ENCODE measurements at regions of chr6 and their contacts with region 1.

Region 1: GRCh38 chr6:42505377-42505702 is 53.6 kb upstream of the TRERF1 start:
- DNase-seq: no peak
- H3K4me3 Mint-ChIP-seq: no peak overlapping the region
- H3K27ac Mint-ChIP-seq: no peak overlapping the region
- H3K4me1 Mint-ChIP-seq: peaks cover 23% of the 10 kb centered on the region
- H3K27me3 Mint-ChIP-seq: peaks cover 6% of the 10 kb centered on the region

Region 2: DNA sequence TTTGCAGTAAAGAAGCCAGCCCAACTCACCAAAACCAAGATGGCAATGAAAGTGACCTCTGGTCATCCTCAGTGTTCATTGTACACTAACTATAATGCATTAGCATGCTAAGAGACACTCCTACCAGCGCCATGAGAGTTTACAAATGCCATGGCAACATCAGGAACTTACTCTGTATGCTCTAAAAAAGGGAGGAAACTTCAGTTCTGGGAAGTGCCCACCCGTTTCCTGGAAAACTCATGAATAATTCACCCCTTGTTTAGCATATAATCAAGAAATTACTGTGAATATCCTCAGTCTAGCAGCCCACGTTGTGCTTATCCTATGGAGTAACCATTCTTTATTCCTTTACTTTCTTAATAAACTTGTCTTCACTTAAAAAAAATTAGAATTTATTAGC is 34.2 kb before region 1 on chr6:
- intact Hi-C with region 1: loop called (anchors 5 kb)
- DNase-seq: no peak
- H3K4me3 Mint-ChIP-seq: no peak overlapping the region
- H3K27ac Mint-ChIP-seq: no peak overlapping the region
- H3K4me1 Mint-ChIP-seq: peaks cover 5% of the 10 kb centered on the region
- H3K27me3 Mint-ChIP-seq: peaks cover 5% of the 10 kb centered on the region

Region 3: GRCh38 chr6:42520786-42521607 is 15.7 kb after region 1 on chr6:
- intact Hi-C with region 1: loop called (anchors 1 kb)
- DNase-seq: no peak
- H3K4me3 Mint-ChIP-seq: peak overlapping the region; percentile 9
- H3K27ac Mint-ChIP-seq: peak overlapping the region; percentile 89
- H3K4me1 Mint-ChIP-seq: peaks cover 16% of the 10 kb centered on the region
- H3K27me3 Mint-ChIP-seq: peaks cover 4% of the 10 kb centered on the region